PC-3 (cell line): ENCODE measurements at regions of chrX and their contacts with region 1.

Region 1: DNA sequence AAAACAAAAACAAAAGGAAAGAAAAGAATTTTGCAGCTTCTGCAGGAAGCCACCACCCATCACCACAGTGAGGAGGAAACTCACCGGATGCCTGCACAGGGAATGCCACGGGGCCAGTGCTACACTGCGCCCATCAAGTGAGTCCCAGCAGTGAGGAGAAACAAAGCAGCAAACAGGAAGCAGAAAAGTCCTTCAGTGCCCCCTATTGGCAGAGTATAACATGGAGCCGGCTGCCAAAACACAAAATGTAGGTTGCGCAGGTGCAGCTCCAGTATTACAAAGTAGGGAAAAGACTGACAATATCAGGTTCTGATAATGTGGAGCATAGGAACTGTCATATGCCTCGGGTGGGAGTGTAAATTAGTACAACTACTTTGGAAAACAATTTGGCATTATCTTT is 23.3 kb upstream of the SCML2 start:
- DNase-seq: peak; percentile 54
- ATAC-seq: peak; percentile 80
- H3K4me3 ChIP-seq: no peak overlapping the region
- H3K27ac ChIP-seq: no peak overlapping the region
- H3K4me1 ChIP-seq: no peaks in the 10 kb centered on the region
- H3K27me3 ChIP-seq: no peaks in the 10 kb centered on the region
- CTCF ChIP-seq: peak; percentile 71

Region 2: DNA sequence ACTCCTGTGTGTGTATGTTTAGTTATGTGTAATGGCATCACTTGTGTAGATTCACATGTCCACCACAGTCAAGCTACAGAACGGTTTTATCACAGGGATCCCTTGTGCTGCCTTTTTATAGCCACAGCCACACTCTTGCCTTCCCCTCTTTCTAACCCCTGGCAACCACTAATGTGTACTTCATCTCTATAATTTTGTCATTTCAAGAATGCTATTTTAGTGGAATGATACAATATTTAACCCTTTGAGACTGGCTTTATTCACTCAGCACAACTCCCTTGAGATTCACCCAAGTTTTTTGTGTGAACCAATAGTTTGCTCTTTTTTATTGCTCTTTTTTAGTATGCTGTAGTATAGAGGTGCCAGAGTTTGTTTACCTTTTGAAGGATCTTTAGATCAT is 159.7 kb after region 1 on chrX:
- CTCF ChIA-PET with region 1: no interaction called
- POLR2A ChIA-PET with region 1: no interaction called
- intact Hi-C with region 1: no loop called
- DNase-seq: no peak
- ATAC-seq: no peak
- H3K4me3 ChIP-seq: no peak overlapping the region
- H3K27ac ChIP-seq: no peak overlapping the region
- H3K4me1 ChIP-seq: no peaks in the 10 kb centered on the region
- H3K27me3 ChIP-seq: no peaks in the 10 kb centered on the region
- CTCF ChIP-seq: no peak

Region 3: GRCh38 chrX:19343535-19344408 is 966.0 kb after region 1 on chrX and contains the start of gene PDHA1:
- CTCF ChIA-PET with region 1: interaction called, 13 read pairs
- POLR2A ChIA-PET with region 1: no interaction called
- intact Hi-C with region 1: no loop called
- DNase-seq: peak; percentile 95
- ATAC-seq: peak; percentile 88
- H3K4me3 ChIP-seq: peak within 1 kb of the TSS; percentile 80
- H3K27ac ChIP-seq: 0 out of 2 replicates have a peak within 1 kb of the TSS, but pooled peaks have one; percentile 18
- H3K4me1 ChIP-seq: peaks cover 12% of the 10 kb centered on the region; the same call in 1 of the 2 replicates
- H3K27me3 ChIP-seq: no peaks in the 10 kb centered on the region
- CTCF ChIP-seq: no peak
- total RNA-seq, gene PDHA1: 408 and 454 TPM in 2 replicates